Activated B cell treated with CpG ODN at 0.5 μM for 24 hours (primary cell): ENCODE measurements at regions of chr10 and their contacts with region 1.

Region 1: DNA sequence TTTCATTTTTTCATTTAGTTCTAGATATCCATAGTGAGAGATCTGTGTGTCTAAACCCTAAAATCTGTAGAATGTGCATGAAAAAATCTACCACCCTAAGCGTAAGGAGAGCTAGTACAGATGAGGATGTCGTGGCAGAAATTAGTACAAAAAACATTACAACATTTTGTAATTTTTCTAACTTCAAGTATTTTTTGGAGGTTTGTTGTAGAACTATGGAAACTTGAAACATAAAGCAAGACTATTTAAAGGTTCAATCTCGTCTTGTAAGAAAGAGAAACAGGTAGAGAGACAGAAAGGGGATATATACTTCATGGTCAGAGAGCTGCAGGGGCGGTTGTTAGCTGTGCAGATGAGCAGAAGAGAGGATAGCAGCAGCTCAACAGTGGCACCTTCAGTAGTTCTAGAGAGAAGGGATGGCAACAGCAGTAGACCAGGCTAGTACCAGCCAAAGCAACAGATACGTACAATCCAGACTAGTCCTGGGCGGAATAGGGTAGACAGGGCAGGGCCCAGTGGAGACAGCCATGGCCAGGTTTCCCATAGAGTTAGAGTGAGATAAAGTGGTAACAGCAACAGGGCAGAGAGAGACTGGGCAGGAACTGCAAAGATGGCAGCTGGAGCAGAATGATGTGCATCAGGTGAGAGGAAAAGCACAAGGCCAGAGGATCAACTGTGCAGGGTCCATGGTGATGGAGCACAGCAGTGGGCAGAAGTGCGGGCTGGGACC is 145.2 kb downstream of the FRMD4A start:
- DNase-seq: peak; percentile 23
- ATAC-seq: peak; percentile 86
- H3K4me3 Mint-ChIP-seq: peak overlapping the region; percentile 64
- H3K27ac Mint-ChIP-seq: peak overlapping the region; percentile 88
- H3K4me1 Mint-ChIP-seq: peaks cover 37% of the 10 kb centered on the region
- H3K27me3 Mint-ChIP-seq: peaks cover 15% of the 10 kb centered on the region
- CTCF ChIP-seq: no peak

Region 2: DNA sequence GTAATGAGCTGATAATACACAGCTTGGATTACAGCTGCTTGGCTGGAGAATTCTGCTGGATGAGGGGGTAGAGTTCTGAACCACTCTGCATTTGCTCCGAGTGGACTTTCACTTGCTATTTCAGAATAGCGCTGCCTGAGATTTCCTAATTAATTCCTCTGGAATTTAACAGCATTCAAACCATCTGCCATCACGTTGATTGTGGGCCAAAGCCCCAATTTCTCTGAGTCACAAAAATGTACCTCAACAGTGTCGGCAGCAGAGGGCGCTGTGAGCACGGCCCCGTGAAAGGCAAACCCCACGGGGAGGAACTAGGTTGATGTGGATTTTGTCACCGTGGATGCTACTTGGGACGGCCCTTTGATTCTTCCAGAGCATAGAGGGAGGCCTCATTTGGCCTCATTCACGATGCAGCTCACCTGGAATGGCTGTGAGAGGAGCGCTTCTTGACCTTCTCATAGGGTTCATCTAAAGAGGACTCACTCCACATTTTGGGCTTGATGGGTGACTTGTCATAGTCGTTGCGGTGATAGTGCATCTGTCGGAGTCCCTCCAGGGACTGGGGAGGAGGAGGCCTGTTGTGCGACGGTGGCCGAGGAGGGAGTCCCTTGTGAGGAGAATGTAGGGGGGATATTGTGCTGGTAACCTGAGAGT is 525.5 kb before region 1 on chr10:
- CTCF ChIA-PET with region 1: interaction called, 8 read pairs
- POLR2A ChIA-PET with region 1: no interaction called
- intact Hi-C with region 1: loop called (anchors 5 kb)
- DNase-seq: peak; percentile 63
- ATAC-seq: peak; percentile 75
- H3K4me3 Mint-ChIP-seq: no peak overlapping the region
- H3K27ac Mint-ChIP-seq: no peak overlapping the region
- H3K4me1 Mint-ChIP-seq: peaks cover 11% of the 10 kb centered on the region
- H3K27me3 Mint-ChIP-seq: no peaks in the 10 kb centered on the region
- CTCF ChIP-seq: peak; percentile 83

Region 3: DNA sequence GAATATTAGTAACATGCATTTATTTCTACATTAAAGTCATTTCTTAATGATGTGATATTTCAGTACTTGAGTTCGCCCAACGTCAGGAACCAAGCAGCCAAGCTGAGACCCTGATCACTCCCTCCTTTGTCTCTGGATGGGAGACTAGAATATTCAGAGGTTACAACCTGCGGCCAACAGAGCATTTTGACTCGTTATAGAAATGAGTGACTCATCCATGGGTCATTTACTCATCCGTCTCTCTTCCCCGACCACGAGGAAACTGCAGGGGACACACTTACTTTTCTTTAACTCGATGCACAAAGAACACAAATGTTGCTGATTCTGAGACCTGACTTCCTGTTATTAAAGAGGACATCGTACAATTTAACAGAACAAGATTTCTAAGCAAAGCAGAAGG is 198.0 kb before region 1 on chr10:
- CTCF ChIA-PET with region 1: no interaction called
- POLR2A ChIA-PET with region 1: no interaction called
- intact Hi-C with region 1: loop called (anchors 10 kb)
- DNase-seq: no peak
- ATAC-seq: no peak
- H3K4me3 Mint-ChIP-seq: no peak overlapping the region
- H3K27ac Mint-ChIP-seq: no peak overlapping the region
- H3K4me1 Mint-ChIP-seq: peaks cover 15% of the 10 kb centered on the region
- H3K27me3 Mint-ChIP-seq: peaks cover 2% of the 10 kb centered on the region
- CTCF ChIP-seq: no peak

Region 4: DNA sequence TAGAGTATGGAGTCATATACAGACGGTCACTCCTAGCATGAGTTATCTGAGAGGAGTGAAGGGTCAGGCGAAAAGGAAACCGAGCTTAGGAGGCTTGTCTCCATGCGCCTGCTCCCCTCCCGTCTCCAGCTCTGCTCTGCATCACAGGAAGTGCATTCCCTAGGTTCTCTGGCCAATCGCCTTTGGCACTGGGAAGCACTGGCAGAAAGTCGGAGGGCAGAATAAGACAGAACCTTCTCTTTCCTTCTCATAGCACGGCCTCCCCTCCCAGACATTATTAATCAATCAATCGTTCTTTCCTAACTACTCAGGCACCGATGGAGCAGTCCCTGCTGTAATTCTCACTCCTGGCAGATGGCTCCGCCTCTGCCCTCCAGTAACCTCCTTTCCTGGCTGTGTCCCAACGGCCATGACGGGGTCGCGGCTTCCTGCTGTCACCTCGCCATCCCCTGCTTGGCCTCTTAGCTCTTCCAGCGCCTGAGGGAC is 31.9 kb before region 1 on chr10:
- CTCF ChIA-PET with region 1: no interaction called
- POLR2A ChIA-PET with region 1: no interaction called
- intact Hi-C with region 1: no loop called
- DNase-seq: no peak
- ATAC-seq: no peak
- H3K4me3 Mint-ChIP-seq: no peak overlapping the region
- H3K27ac Mint-ChIP-seq: no peak overlapping the region
- H3K4me1 Mint-ChIP-seq: peaks cover 2% of the 10 kb centered on the region
- H3K27me3 Mint-ChIP-seq: peaks cover 29% of the 10 kb centered on the region
- CTCF ChIP-seq: no peak

Region 5: GRCh38 chr10:14173706-14174594 is 11.5 kb before region 1 on chr10:
- CTCF ChIA-PET with region 1: no interaction called
- POLR2A ChIA-PET with region 1: interaction called, 12 read pairs
- intact Hi-C with region 1: no loop called
- DNase-seq: no peak
- ATAC-seq: no peak
- H3K4me3 Mint-ChIP-seq: peak overlapping the region; percentile 79
- H3K27ac Mint-ChIP-seq: no peak overlapping the region
- H3K4me1 Mint-ChIP-seq: peaks cover 19% of the 10 kb centered on the region
- H3K27me3 Mint-ChIP-seq: peaks cover 77% of the 10 kb centered on the region
- CTCF ChIP-seq: no peak

Region 6: DNA sequence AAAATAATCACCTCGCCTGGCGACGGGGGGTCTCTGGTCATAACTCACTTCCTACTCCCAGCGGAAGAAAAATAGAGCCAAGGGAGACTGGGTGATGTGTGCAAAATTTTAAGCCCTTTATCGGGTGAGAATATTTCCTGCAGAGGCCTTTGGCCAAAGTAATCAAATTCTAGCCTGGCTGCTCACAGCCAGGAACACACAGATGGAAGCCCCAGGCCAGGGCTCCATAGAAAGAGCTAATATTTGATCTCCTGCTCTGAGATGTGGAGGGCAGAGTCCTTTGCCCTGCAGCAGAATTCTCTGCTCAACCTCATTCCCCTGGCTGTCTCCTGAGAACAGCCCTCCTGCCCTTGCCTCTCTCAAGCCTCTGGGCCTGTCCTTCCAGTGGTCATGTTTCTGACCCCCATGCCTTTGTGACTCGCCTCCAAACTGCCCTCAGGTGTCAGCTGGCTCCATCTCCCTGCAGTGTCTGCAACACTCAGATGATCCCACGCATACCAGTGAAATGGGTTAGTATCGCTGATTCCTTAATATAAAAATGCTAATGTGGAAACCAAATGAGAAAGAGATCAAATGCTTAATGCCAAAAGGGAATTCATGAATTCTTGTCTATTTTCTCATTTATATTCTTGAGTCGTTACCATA is 110.7 kb after region 1 on chr10:
- CTCF ChIA-PET with region 1: no interaction called
- POLR2A ChIA-PET with region 1: no interaction called
- intact Hi-C with region 1: no loop called
- DNase-seq: no peak
- ATAC-seq: no peak
- H3K4me3 Mint-ChIP-seq: no peak overlapping the region
- H3K27ac Mint-ChIP-seq: no peak overlapping the region
- H3K4me1 Mint-ChIP-seq: no peaks in the 10 kb centered on the region
- H3K27me3 Mint-ChIP-seq: peaks cover 12% of the 10 kb centered on the region
- CTCF ChIP-seq: no peak